PC-3 (cell line): ENCODE measurements at regions of chr3 and their contacts with region 1.

Region 1: DNA sequence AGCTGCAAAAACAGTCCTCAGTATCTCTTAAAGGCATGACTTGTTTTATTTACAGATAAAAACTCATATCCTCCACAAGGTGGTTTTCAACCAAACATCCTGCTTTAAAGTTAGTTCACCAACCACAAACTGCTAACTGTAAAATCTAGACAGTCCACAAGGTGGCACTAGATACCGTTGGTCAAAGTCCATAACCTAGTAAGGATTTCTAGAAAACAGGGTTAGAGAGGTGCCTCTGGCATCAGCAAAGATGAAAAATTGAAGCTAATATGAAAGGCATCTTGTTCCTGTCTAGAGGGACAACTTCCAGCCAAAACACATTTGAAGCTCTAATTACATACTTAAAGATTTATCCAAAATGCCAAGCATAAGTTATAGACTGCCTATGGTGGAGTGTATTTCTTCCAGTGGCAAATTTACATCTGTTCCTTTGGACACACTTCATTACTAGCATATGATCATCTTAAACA is 56.0 kb downstream of the ZMAT3 start:
- DNase-seq: peak; percentile 96
- ATAC-seq: peak; percentile 86
- H3K4me3 ChIP-seq: no peak overlapping the region
- H3K27ac ChIP-seq: no peak overlapping the region
- H3K4me1 ChIP-seq: peaks cover 4% of the 10 kb centered on the region; the same call in 1 of the 2 replicates
- H3K27me3 ChIP-seq: no peaks in the 10 kb centered on the region
- CTCF ChIP-seq: peak; percentile 95

Region 2: DNA sequence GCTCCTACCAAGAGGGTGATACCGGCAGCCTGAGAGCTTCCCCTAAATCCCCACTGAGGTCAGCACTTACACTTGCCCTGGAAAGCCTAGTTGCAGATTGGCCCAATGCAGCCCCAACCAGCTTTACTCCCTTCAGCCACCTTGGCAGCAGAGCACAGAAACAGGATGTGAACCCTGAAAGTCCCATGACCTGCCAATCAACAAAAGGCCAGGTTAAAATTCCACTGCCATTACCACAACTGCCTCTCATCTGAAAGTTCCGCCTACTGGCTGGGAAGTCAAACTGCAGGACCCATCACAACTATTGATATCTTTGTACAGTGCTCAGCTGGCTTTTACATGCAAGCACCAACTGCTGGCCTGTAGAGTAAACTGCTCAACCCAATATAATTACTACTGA is 100.2 kb before region 1 on chr3:
- CTCF ChIA-PET with region 1: no interaction called
- POLR2A ChIA-PET with region 1: no interaction called
- intact Hi-C with region 1: no loop called
- DNase-seq: no peak
- ATAC-seq: no peak
- H3K4me3 ChIP-seq: no peak overlapping the region
- H3K27ac ChIP-seq: no peak overlapping the region
- H3K4me1 ChIP-seq: no peaks in the 10 kb centered on the region
- H3K27me3 ChIP-seq: no peaks in the 10 kb centered on the region
- CTCF ChIP-seq: no peak; the same call in 1 of the 2 replicates

Region 3: DNA sequence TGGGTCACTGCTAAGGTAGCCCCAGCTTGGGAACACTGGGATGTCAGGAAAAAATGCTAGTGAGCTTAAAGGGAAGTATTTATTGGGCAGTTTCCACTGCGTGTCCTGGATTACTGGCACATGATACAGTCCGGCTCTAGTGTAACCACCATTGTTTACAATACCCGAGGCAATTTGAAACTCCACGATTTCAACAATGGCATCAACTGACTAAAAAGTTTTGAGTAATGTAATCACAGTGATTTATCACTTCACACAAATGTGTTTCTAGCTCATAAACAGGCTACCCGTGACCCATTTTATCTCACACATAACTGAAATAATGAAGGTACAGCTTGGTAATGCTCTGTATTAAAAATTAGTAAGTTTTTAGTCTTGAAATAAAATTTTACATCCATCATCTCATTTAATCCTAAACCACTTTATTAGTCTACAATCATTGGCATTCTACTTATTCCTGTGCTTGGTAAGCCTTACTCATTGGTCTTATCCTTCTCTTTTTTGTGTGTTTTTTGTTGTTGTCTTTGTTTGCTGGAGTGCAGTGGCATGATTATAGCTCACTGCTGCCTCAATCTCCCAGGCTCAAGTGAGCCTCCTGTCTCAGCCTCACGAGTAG is 48.5 kb after region 1 on chr3:
- CTCF ChIA-PET with region 1: interaction called, 6 read pairs
- POLR2A ChIA-PET with region 1: no interaction called
- intact Hi-C with region 1: loop called (anchors 1 kb)
- DNase-seq: peak; percentile 71
- ATAC-seq: peak; percentile 95
- H3K4me3 ChIP-seq: no peak overlapping the region
- H3K27ac ChIP-seq: peak overlapping the region; percentile 9; the same call in 1 of the 2 replicates
- H3K4me1 ChIP-seq: peaks cover 14% of the 10 kb centered on the region
- H3K27me3 ChIP-seq: no peaks in the 10 kb centered on the region
- CTCF ChIP-seq: no peak

Region 4: DNA sequence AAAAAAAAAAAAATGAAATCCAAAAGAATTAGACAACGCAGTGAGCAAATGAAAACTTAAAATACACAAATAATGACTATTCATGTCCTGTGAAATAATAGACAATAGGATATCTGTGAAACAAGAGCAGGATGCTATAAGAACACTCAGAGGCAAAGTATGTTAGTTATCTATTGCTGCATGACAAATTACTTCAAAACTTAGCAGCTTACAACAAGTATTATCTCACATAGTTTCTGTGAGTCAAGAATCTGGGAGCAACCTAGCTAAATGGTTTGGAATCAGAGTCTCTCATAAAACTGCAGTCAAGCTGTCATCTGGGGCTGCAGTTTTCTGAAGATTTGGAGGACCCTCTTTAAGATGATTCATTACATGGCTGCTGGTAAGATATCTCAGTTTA is 92.5 kb after region 1 on chr3:
- CTCF ChIA-PET with region 1: no interaction called
- POLR2A ChIA-PET with region 1: no interaction called
- intact Hi-C with region 1: loop called (anchors 2 kb)
- DNase-seq: peak; percentile 76
- ATAC-seq: peak; percentile 91
- H3K4me3 ChIP-seq: no peak overlapping the region
- H3K27ac ChIP-seq: peak overlapping the region; percentile 35
- H3K4me1 ChIP-seq: peaks cover 14% of the 10 kb centered on the region
- H3K27me3 ChIP-seq: no peaks in the 10 kb centered on the region
- CTCF ChIP-seq: no peak

Region 5: GRCh38 chr3:179309225-179310078 is 293.9 kb after region 1 on chr3:
- CTCF ChIA-PET with region 1: interaction called, 14 read pairs
- POLR2A ChIA-PET with region 1: no interaction called
- intact Hi-C with region 1: no loop called
- DNase-seq: no peak
- ATAC-seq: no peak
- H3K4me3 ChIP-seq: no peak overlapping the region
- H3K27ac ChIP-seq: no peak overlapping the region
- H3K4me1 ChIP-seq: no peaks in the 10 kb centered on the region
- H3K27me3 ChIP-seq: no peaks in the 10 kb centered on the region
- CTCF ChIP-seq: no peak

Region 6: GRCh38 chr3:179562591-179563270 is 547.1 kb after region 1 on chr3 and contains the start of gene ACTL6A:
- CTCF ChIA-PET with region 1: no interaction called
- POLR2A ChIA-PET with region 1: no interaction called
- intact Hi-C with region 1: loop called (anchors 5 kb)
- DNase-seq: peak; percentile 100
- ATAC-seq: peak; percentile 94
- H3K4me3 ChIP-seq: peak within 1 kb of the TSS; percentile 89
- H3K27ac ChIP-seq: peak within 1 kb of the TSS; percentile 49
- H3K4me1 ChIP-seq: peaks cover 23% of the 10 kb centered on the region
- H3K27me3 ChIP-seq: no peaks in the 10 kb centered on the region
- CTCF ChIP-seq: no peak
- total RNA-seq, gene ACTL6A: 102 and 105 TPM in 2 replicates